ENCODE measurements at regions of chr4 and their contacts with region 1.

Region 1: DNA sequence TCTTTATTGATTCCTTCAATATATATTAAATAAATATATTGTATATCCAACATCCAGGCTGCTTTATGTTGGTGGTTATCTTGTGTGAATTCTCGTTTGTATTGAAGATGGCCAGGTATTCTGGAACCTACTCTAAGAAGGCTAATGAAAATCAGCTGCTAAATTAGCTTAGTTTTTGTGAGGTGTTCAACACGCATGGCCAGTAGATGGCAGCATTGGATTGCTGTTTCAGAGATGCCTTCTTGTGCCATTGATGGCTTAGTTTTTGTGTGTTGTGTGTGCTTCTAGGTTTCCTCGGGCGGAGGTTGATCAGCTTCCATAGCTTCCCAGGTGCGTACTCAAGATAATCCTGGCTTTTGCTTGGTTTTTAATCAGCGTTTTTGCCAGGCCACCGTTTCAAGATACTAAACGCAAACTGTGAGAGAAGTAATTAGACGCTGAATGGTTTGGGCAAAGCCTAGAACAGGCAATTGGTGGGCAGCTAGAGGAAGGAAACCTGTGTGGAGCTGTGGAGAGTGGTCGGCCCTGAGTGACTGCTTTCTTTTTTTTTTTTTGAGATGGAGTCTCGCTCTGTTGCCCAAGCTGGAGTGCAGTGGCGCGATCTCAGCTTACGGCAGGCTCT is 15.1 kb downstream of the NOCT start:
- DNase-seq: peak; percentile 63 to 81 (median 68)
- H3K4me3 ChIP-seq: no peak overlapping the region
- H3K4me3 Mint-ChIP-seq: no peak overlapping the region
- H3K27ac ChIP-seq: no peak overlapping the region
- H3K27ac Mint-ChIP-seq: peak overlapping the region in 6 of 8 donors; percentile 3 to 28 (median 10)
- H3K4me1 ChIP-seq: no peaks in the 10 kb centered on the region
- H3K4me1 Mint-ChIP-seq: peaks cover 7 to 18% (median 7%) of the 10 kb centered on the region in 3 donors
- H3K27me3 ChIP-seq: no peaks in the 10 kb centered on the region
- H3K27me3 Mint-ChIP-seq: no peaks in the 10 kb centered on the region

Region 2: DNA sequence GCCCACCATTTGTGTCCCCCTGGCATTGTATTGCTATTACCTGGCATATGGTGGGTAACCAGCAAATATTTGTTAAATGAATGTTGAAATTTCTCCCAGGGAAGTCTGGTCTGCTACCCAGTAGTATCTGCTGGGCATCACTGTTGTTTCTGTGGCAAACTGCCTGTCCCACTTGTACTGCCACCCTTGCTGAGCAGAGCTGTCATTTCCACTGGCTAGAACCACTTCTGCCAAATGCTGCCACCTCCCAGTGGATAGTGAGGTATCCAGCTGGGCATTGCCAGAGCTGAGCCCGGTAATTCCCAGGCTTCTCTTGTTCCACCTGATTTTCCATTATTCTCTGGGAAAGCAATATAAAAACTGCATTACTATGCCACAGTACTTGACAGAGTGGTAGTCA is 201.8 kb before region 1 on chr4:
- CTCF ChIA-PET with region 1: no interaction called
- POLR2A ChIA-PET with region 1: no interaction called
- DNase-seq: no peak
- H3K4me3 ChIP-seq: no peak overlapping the region
- H3K4me3 Mint-ChIP-seq: no peak overlapping the region
- H3K27ac ChIP-seq: no peak overlapping the region
- H3K27ac Mint-ChIP-seq: peak overlapping the region in 1 of 8 donors; percentile 1
- H3K4me1 ChIP-seq: no peaks in the 10 kb centered on the region
- H3K4me1 Mint-ChIP-seq: no peaks in the 10 kb centered on the region
- H3K27me3 ChIP-seq: no peaks in the 10 kb centered on the region
- H3K27me3 Mint-ChIP-seq: peaks cover 0 to 6% of the 10 kb centered on the region in 2 donors

Region 3: DNA sequence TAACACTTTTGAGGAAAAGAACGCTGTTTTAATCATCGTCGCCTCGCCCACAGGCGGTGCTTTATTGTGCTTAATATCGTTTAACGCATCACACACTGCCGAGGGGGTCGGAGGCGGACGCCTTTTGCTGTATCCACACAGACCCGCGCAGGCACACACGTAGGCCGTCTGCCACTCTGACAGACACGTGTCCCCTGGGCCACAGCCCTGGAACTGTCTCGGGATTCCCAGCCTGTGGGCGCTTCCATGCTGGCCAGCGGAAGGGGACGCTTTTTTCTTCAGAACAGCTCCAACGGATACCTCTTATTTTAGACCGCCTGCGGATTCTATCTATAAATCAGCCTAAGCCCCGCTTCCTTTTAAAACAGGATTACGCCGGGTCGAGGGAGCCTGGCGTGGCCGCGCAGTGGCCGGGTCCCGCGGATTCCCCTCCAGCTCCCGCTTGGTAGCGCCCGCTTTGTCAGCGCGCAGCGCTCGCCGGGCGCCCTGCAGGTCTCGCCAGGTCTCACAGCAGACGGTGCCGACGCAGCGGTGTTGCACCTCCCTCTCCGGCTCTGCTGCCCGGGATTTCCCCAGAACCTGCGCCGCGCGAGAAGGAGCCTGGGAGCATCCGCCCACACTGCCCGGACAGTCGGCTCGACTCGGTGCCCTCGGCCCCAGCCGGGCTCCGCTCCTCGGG is 15.3 kb before region 1 on chr4 and contains the start of gene NOCT:
- CTCF ChIA-PET with region 1: interaction called, 41 read pairs
- POLR2A ChIA-PET with region 1: interaction called, 6 read pairs
- DNase-seq: peak; percentile 91 to 94 (median 92)
- H3K4me3 ChIP-seq: peak within 1 kb of the TSS; percentile 62
- H3K4me3 Mint-ChIP-seq: peak within 1 kb of the TSS; percentile 88 to 95 (median 92)
- H3K27ac ChIP-seq: peak within 1 kb of the TSS; percentile 78
- H3K27ac Mint-ChIP-seq: peak within 1 kb of the TSS; percentile 96 to 100 (median 98)
- H3K4me1 ChIP-seq: peaks cover 15% of the 10 kb centered on the region
- H3K4me1 Mint-ChIP-seq: peaks cover 20 to 37% (median 28%) of the 10 kb centered on the region in 3 donors
- H3K27me3 ChIP-seq: no peaks in the 10 kb centered on the region
- H3K27me3 Mint-ChIP-seq: no peaks in the 10 kb centered on the region
- total RNA-seq, gene NOCT: 18.3 to 20.3 TPM

Region 4: DNA sequence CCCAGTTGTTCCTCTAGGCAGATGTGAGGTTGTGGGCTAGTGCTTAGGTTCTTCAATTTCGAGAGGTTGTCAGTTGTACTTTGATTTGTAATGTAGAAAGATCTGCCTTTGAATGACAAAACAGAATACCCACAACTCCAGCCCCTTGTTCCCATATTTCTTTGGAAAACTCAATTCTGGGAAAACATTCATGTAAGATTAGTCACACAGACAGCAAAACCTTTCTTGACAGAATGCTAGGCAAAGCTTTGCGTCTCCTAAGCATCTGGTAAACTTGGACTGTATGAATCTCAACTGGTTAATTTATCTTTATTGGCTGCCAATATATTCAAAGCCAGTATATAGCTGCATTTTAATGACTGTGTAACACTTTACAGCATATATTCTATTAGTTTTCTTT is 19.7 kb after region 1 on chr4:
- CTCF ChIA-PET with region 1: interaction called, 13 read pairs
- POLR2A ChIA-PET with region 1: no interaction called
- DNase-seq: no peak
- H3K4me3 ChIP-seq: no peak overlapping the region
- H3K4me3 Mint-ChIP-seq: no peak overlapping the region
- H3K27ac ChIP-seq: no peak overlapping the region
- H3K27ac Mint-ChIP-seq: peak overlapping the region in 1 of 8 donors; percentile 29
- H3K4me1 ChIP-seq: no peaks in the 10 kb centered on the region
- H3K4me1 Mint-ChIP-seq: peaks cover 13 to 25% (median 24%) of the 10 kb centered on the region in 3 donors
- H3K27me3 ChIP-seq: no peaks in the 10 kb centered on the region
- H3K27me3 Mint-ChIP-seq: no peaks in the 10 kb centered on the region

Region 5: DNA sequence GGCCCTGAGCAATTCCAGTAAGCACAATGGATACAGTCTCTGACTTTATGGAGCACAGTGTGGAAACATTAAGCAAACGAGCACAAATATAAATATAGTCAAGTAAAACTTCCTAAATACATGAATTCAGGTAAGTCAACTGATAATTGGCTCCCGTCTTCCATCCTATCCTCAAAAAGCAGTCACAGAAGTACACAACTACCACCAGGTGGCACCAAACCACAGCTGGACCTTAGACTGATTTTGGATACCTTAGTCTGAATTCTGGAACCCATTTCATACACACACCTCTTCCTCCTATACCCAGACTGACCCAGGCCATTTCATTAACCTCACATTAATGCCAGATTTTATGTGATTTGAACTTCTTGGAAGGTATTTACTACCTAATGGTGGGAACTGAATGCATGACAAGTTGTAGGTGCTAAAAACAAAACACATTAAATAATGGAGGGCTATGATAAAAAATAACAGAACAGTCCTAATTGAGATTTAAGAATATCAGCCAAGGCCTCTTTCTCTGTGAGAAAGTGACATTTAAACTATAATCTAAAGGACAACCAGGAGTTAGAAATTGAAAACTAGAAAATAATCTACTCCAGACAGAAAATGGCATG is 68.7 kb after region 1 on chr4:
- CTCF ChIA-PET with region 1: interaction called, 10 read pairs
- POLR2A ChIA-PET with region 1: no interaction called
- DNase-seq: peak; percentile 56 to 81 (median 64)
- H3K4me3 ChIP-seq: no peak overlapping the region
- H3K4me3 Mint-ChIP-seq: no peak overlapping the region
- H3K27ac ChIP-seq: no peak overlapping the region
- H3K27ac Mint-ChIP-seq: peak overlapping the region in 1 of 8 donors; percentile 4
- H3K4me1 ChIP-seq: no peaks in the 10 kb centered on the region
- H3K4me1 Mint-ChIP-seq: peaks cover 0 to 4% (median 2%) of the 10 kb centered on the region in 3 donors
- H3K27me3 ChIP-seq: no peaks in the 10 kb centered on the region
- H3K27me3 Mint-ChIP-seq: no peaks in the 10 kb centered on the region

Region 6: DNA sequence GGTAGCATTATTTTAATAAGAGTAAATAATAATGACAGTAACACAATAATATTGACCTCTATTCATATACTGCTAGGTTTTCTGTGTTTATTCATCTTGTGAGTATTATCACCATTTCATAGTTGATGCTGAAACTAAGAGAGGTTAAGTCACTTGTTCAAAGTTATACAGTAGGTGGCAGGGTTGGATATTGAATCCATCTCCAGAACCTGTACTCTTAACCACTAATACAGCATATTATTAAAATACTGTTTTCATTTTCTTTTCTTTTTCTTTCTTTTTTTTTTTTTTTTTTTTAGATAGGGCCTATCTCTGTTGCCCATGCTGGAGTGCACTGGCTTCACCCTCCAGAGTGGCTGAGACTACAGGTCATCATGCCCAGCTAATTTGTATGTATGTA is 153.4 kb after region 1 on chr4:
- CTCF ChIA-PET with region 1: no interaction called
- POLR2A ChIA-PET with region 1: no interaction called
- DNase-seq: no peak
- H3K4me3 ChIP-seq: no peak overlapping the region
- H3K4me3 Mint-ChIP-seq: no peak overlapping the region
- H3K27ac ChIP-seq: no peak overlapping the region
- H3K27ac Mint-ChIP-seq: no peak overlapping the region
- H3K4me1 ChIP-seq: no peaks in the 10 kb centered on the region
- H3K4me1 Mint-ChIP-seq: no peaks in the 10 kb centered on the region
- H3K27me3 ChIP-seq: no peaks in the 10 kb centered on the region
- H3K27me3 Mint-ChIP-seq: peaks cover 0 to 1% of the 10 kb centered on the region in 2 donors

Region 7: GRCh38 chr4:139295206-139295941 is 264.6 kb after region 1 on chr4:
- CTCF ChIA-PET with region 1: interaction called, 26 read pairs
- POLR2A ChIA-PET with region 1: no interaction called
- DNase-seq: peak; percentile 89 to 98 (median 97)
- H3K4me3 ChIP-seq: peak overlapping the region; percentile 77
- H3K4me3 Mint-ChIP-seq: peak overlapping the region; percentile 95 to 100 (median 96)
- H3K27ac ChIP-seq: peak overlapping the region; percentile 91
- H3K27ac Mint-ChIP-seq: peak overlapping the region; percentile 97 to 99 (median 98)
- H3K4me1 ChIP-seq: peaks cover 33% of the 10 kb centered on the region
- H3K4me1 Mint-ChIP-seq: peaks cover 23 to 54% (median 49%) of the 10 kb centered on the region in 3 donors
- H3K27me3 ChIP-seq: no peaks in the 10 kb centered on the region
- H3K27me3 Mint-ChIP-seq: no peaks in the 10 kb centered on the region